ENCODE measurements at regions of chr13 and their contacts with region 1.

Region 1: GRCh38 chr13:46655377-46656180 is 102.6 kb downstream of the LRCH1 start:
- DNase-seq: peak in 1 of 3 donors; percentile 60
- H3K4me3 ChIP-seq: peak overlapping the region in 4 of 7 experiments; percentile 31 to 63 (median 50)
- H3K27ac ChIP-seq: peak overlapping the region; percentile 48 to 83
- H3K4me1 ChIP-seq: peaks cover 0 to 34% (median 20%) of the 10 kb centered on the region in 4 experiments
- H3K27me3 ChIP-seq: no peaks in the 10 kb centered on the region

Region 2: DNA sequence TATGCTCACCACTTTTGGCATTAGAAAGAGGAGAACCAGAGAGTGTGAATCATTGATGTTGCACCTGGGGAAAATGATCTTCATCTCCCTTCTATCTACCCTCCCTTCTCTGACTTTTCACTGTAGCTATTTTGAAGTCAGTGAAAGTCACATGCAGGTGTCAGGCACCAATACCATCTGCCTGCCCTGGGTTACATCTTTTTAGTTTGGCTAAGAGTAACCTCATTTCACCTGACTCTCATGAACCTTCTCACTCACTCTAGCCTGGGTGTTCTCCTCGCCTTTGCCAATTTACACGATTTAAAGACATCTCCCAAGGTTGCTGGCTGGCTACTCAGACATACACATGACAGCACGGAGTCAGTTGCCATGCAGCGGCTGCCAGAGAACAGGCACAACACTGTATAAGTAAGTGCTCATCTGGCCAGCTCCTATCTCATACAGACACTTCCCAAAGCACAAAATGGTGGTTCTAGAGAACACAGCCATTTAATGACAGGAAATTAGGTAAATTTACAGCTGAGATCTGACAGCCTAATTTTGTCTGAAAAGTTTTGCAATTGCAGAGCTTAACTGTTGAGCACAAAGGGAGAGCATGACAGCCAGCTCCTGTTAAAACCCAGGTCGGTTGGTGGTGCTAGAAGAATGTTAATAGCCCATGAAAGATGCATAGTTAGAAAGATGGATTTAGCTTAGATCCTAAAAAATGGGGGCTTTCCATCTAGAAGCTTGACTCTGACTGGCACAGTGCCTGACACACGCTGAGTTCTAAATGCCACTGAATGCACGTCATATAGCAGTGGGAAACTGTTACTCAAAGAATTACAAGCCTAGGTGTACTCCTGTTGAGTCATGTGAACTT is 506.1 kb before region 1 on chr13:
- CTCF ChIA-PET with region 1: no interaction called
- POLR2A ChIA-PET with region 1: no interaction called
- DNase-seq: no peak
- H3K4me3 ChIP-seq: no peak overlapping the region
- H3K27ac ChIP-seq: no peak overlapping the region
- H3K4me1 ChIP-seq: no peaks in the 10 kb centered on the region
- H3K27me3 ChIP-seq: no peaks in the 10 kb centered on the region

Region 3: DNA sequence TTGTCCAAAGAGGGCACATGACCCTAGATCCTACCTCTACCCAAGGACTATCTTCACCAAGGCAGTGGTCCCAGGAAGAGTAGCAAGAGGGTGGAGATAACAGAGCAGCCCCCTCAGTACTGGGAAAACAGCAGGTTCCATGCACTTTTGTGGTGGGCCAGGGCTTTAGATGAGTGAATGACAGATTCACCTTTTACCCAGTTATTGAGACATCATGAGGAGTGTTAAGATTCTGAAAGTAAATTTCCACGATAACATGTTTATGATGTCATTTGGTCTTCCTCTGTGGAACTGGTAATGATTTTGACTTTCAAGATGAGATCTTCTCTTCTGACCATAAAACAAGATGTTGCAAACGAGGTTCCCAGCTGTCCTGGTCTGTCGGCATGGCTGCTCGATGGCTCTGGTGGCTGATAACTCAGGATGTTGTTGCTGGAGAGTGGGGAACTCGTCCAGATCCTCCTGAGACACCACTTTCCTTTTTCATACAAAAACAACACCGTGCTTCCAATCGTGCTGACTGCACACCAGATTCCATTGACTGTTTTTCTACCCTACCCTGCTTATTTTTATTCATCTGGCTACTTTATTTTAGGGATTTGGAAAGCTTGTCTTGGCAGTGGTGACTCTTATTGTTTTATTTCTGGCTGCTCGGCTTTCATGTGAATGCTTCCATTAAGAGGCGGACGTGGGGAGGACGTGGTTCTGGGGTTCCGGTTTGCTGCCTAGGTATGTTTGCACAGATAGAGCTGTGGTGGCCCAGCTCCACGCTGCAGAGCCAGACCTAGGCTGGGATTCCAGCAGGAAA is 14.1 kb before region 1 on chr13:
- CTCF ChIA-PET with region 1: interaction called, 14 read pairs
- POLR2A ChIA-PET with region 1: interaction called, 3 read pairs
- DNase-seq: peak in 1 of 3 donors; percentile 58
- H3K4me3 ChIP-seq: peak overlapping the region in 2 of 7 experiments; percentile 8 to 52
- H3K27ac ChIP-seq: no peak overlapping the region
- H3K4me1 ChIP-seq: peaks cover 0 to 35% (median 10%) of the 10 kb centered on the region in 4 experiments
- H3K27me3 ChIP-seq: no peaks in the 10 kb centered on the region

Region 4: GRCh38 chr13:46668302-46668720 is 12.7 kb after region 1 on chr13:
- CTCF ChIA-PET with region 1: interaction called, 13 read pairs
- POLR2A ChIA-PET with region 1: no interaction called
- DNase-seq: peak; percentile 77 to 96 (median 95)
- H3K4me3 ChIP-seq: peak overlapping the region in 6 of 7 experiments; percentile 42 to 78 (median 60)
- H3K27ac ChIP-seq: peak overlapping the region; percentile 67 to 76
- H3K4me1 ChIP-seq: peaks cover 13 to 62% (median 40%) of the 10 kb centered on the region in 4 experiments
- H3K27me3 ChIP-seq: no peaks in the 10 kb centered on the region